ENCODE measurements at regions of chr19 and their contacts with region 1.

Region 1: DNA sequence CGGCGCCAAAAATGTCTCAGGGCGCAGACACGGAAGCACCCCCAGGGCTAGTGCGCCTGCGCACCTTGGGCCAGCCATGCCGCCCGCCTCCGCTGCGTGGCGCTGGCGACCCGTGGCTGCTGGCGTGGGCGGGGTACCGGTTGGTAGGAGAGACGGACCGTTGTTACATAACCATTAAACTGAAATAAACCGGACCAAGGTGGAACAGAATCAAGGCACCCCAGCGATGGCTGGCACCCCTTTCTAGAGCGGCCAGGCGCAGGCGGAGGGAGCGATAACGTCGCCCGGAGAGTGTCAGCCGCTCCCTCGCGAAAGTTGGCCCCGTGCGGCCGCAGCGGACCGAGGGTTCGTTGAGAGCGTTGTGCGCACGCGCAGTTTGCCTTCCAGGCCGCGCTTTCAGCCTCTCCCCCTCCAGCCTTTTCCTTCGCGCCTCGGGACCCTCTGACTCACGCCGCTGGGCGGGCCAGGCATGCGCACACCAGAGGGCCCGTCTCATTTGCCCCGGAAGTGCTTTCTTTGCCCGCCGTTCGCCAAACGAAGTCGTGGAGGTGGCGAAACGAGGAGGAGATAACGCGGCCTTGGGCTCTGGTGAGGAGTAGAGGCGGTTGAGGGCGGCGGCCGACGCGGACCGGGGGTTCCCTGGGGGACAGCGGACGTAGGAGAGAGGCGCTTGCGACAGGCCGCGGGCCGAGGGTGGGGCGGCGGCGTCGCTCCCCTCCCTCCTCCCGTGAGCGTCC is at the starts of genes PLEKHJ1 and SF3A2:
- DNase-seq: peak; percentile 99
- ATAC-seq: peak; percentile 87
- H3K4me3 Mint-ChIP-seq: peak within 1 kb of the TSS; percentile 93
- H3K27ac Mint-ChIP-seq: peak within 1 kb of the TSS; percentile 96
- H3K4me1 Mint-ChIP-seq: peaks cover 59% of the 10 kb centered on the region
- H3K27me3 Mint-ChIP-seq: no peaks in the 10 kb centered on the region
- total RNA-seq, gene PLEKHJ1: 78.3 to 80.8 TPM
- total RNA-seq, gene SF3A2: 167 to 178 TPM

Region 2: DNA sequence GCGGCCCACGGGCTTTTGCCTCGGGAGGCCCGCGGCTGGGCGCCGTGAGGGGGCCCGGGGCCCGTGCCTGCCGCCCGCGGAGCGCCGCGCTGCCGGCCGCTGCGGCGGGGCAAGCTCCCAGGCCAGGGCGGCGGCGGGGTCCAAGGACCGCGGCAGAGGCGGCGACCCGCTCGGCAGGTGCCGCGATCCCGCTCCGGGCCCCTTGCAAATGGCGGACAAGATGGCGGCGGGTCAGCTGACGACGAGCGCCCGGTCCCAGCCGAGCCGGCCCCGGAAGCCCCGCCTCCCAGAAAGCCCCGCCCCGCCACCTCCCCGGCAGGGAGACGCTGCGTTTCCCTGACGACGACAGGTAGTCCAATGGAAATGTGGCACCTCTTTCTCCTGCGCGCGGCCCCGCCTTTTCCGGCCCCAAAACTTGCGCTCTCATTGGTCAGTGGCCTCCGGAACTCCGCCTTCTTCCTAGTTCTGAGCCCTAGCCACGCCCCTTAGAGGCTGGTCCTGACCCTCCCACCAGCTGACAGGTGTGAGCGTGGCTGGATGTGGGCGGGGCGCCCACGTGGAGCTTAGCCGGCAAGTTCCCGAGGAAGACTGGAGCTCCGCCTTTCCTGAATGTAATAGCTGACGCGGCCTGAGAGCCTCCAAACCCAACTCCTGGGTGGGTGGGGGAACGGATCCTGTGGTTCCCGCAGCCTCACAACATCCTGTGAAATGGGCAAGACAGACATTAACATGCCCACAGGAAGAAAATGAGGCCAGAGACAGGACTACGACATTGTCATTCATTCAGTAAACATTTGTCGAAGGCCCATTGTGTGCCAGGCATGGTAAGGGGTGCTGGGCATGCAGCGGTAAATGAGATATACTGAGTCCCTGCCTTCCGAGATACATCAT is 84.9 kb before region 1 on chr19 and contains the start of gene AP3D1:
- CTCF ChIA-PET with region 1: interaction called, 12 read pairs
- DNase-seq: peak; percentile 100
- ATAC-seq: peak; percentile 90
- H3K4me3 Mint-ChIP-seq: peak within 1 kb of the TSS; percentile 80
- H3K27ac Mint-ChIP-seq: peak within 1 kb of the TSS; percentile 78
- H3K4me1 Mint-ChIP-seq: peaks cover 46% of the 10 kb centered on the region
- H3K27me3 Mint-ChIP-seq: no peaks in the 10 kb centered on the region
- total RNA-seq, gene AP3D1: 110 to 127 TPM

Region 3: GRCh38 chr19:2253106-2254053 is 16.9 kb after region 1 on chr19:
- CTCF ChIA-PET with region 1: interaction called, 39 read pairs
- DNase-seq: peak; percentile 55
- ATAC-seq: peak; percentile 10
- H3K4me3 Mint-ChIP-seq: peak overlapping the region; percentile 24
- H3K27ac Mint-ChIP-seq: no peak overlapping the region
- H3K4me1 Mint-ChIP-seq: peaks cover 16% of the 10 kb centered on the region
- H3K27me3 Mint-ChIP-seq: peaks cover 24% of the 10 kb centered on the region

Region 4: GRCh38 chr19:2261438-2262172 is 25.1 kb after region 1 on chr19:
- CTCF ChIA-PET with region 1: interaction called, 68 read pairs
- DNase-seq: peak; percentile 83
- ATAC-seq: peak; percentile 43
- H3K4me3 Mint-ChIP-seq: no peak overlapping the region
- H3K27ac Mint-ChIP-seq: no peak overlapping the region
- H3K4me1 Mint-ChIP-seq: peaks cover 33% of the 10 kb centered on the region
- H3K27me3 Mint-ChIP-seq: no peaks in the 10 kb centered on the region

Region 5: GRCh38 chr19:2269244-2269947 is 32.9 kb after region 1 on chr19:
- CTCF ChIA-PET with region 1: interaction called, 58 read pairs
- DNase-seq: peak; percentile 99
- ATAC-seq: peak; percentile 77
- H3K4me3 Mint-ChIP-seq: peak overlapping the region; percentile 90
- H3K27ac Mint-ChIP-seq: peak overlapping the region; percentile 94
- H3K4me1 Mint-ChIP-seq: peaks cover 39% of the 10 kb centered on the region
- H3K27me3 Mint-ChIP-seq: no peaks in the 10 kb centered on the region

Region 6: DNA sequence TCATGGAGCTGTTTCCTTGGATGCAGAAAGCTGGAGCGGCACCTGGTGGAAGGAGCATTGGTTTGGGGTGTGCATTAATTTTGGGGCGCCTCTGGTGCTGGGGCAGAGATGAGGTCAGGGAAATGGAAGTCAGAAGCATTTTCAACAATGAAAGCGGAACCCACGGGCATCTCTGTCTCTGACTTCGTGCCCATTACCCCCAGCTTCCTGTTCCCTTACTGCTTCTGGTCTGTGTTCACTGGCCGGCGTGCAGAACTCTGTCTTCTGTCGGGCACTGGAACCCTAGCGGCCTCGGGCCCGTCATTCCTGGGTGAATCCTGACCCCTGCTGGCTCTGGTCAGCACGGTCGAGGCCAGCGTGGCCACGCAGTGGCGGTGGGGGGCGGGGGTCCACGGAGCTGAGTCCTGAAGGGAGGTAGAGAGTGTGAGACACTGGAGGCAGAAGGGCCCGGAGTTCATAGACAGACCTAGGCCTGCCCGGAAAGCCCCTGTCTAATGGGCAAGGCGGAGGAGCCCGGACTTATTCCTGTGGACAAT is 79.4 kb after region 1 on chr19:
- CTCF ChIA-PET with region 1: interaction called, 12 read pairs
- DNase-seq: peak; percentile 58
- ATAC-seq: peak; percentile 71
- H3K4me3 Mint-ChIP-seq: no peak overlapping the region
- H3K27ac Mint-ChIP-seq: no peak overlapping the region
- H3K4me1 Mint-ChIP-seq: no peaks in the 10 kb centered on the region
- H3K27me3 Mint-ChIP-seq: peaks cover 33% of the 10 kb centered on the region

Region 7: GRCh38 chr19:2337329-2338043 is 101.0 kb after region 1 on chr19:
- CTCF ChIA-PET with region 1: no interaction called
- DNase-seq: no peak
- ATAC-seq: no peak
- H3K4me3 Mint-ChIP-seq: no peak overlapping the region
- H3K27ac Mint-ChIP-seq: no peak overlapping the region
- H3K4me1 Mint-ChIP-seq: peaks cover 4% of the 10 kb centered on the region
- H3K27me3 Mint-ChIP-seq: no peaks in the 10 kb centered on the region

Measured in activated CD8-positive, alpha-beta memory T cell treated with anti-CD3 and anti-CD28 coated beads, Interleukin-2, amount 10 ng/mL, durations not matched to agents 7 days and 5 days (primary cell).